AG04449 (cell line): ENCODE measurements at regions of chr17 and their contacts with region 1.

Region 1: GRCh38 chr17:78708510-78708973 is 73.5 kb downstream of the CYTH1 start:
- DNase-seq: peak; percentile 57
- H3K4me3 ChIP-seq: no peak overlapping the region
- CTCF ChIP-seq: peak; percentile 95

Region 2: GRCh38 chr17:78497115-78497540 is 211.4 kb before region 1 on chr17:
- CTCF ChIA-PET with region 1: interaction called, 378 read pairs
- POLR2A ChIA-PET with region 1: interaction called, 3 read pairs
- DNase-seq: peak; percentile 12
- H3K4me3 ChIP-seq: no peak overlapping the region
- CTCF ChIP-seq: peak; percentile 87

Region 3: DNA sequence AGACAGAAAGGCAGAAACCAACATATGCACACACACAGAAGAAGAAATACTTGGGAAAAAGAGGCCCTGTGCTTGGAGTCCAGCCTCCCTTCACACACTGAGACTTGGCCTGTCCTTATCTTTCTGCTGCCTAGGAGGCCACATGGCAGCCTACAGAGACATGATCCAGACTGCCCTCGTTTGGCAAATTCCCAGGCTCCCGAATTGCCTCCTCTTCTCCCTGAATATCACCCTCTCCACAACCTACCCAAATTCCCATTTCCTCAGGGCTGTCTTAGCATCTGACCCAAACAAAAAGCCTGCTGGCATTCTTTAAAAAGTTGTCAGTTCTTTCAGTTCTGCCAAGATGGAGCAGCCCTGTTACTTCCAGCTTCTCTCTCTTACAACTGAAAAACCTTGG is 191.1 kb before region 1 on chr17:
- CTCF ChIA-PET with region 1: interaction called, 20 read pairs
- POLR2A ChIA-PET with region 1: no interaction called
- DNase-seq: no peak
- H3K4me3 ChIP-seq: no peak overlapping the region
- CTCF ChIP-seq: no peak

Region 4: DNA sequence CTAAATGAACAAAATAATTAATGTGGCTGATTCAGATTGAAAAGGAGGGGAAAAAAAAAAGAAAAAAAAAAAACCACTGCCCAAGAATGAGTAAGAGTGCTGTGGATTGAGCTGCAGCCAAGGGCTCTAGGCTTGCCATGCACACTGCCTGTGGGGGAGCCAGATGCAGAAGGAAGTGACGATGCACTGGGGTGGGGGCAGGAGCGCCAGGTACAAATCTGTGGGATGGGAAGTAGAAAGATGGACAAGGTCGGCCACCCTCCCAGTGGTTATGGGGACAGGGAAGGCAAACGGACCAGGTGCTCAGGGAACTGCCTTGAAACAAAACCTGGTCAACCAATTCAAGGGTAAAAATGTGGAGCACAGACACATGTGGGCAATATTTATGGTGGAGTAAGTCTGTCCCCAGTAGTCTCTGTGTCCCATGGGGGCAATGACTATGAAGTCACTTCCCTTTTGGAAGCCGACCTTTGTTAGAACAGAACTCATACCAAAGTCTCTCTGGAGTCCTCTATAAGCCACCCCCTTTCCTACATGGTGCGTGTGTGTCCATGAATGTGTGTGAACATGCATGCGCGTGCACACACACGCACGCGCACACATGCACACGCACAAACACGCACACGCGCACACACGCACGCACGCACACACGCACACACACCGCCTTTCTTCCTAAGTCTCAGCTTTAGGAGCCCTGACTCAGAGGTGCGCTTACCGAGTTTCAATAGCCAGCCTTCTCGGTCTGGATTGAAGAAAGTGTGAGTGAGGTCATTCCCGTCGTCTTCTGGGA is 10.8 kb before region 1 on chr17:
- CTCF ChIA-PET with region 1: interaction called, 68 read pairs
- POLR2A ChIA-PET with region 1: no interaction called
- DNase-seq: no peak
- H3K4me3 ChIP-seq: no peak overlapping the region
- CTCF ChIP-seq: no peak

Region 5: GRCh38 chr17:78736526-78737079 is 28.1 kb after region 1 on chr17:
- CTCF ChIA-PET with region 1: interaction called, 68 read pairs
- POLR2A ChIA-PET with region 1: no interaction called
- DNase-seq: no peak
- H3K4me3 ChIP-seq: no peak overlapping the region
- CTCF ChIP-seq: no peak